ENCODE measurements at regions of chr12 and their contacts with region 1.

Region 1: GRCh38 chr12:125183187-125184067 is 118.2 kb downstream of the AACS start:
- DNase-seq: peak; percentile 77 to 94 (median 88)
- H3K4me3 ChIP-seq: peak overlapping the region in 17 of 59 donors; percentile 1 to 41 (median 19)
- H3K27ac ChIP-seq: peak overlapping the region in 52 of 59 donors; percentile 6 to 88 (median 66)
- H3K27me3 ChIP-seq: peaks cover 0 to 11% (median 0%) of the 10 kb centered on the region in 45 donors
- CTCF ChIP-seq: peak; percentile 95 to 100 (median 99)

Region 2: DNA sequence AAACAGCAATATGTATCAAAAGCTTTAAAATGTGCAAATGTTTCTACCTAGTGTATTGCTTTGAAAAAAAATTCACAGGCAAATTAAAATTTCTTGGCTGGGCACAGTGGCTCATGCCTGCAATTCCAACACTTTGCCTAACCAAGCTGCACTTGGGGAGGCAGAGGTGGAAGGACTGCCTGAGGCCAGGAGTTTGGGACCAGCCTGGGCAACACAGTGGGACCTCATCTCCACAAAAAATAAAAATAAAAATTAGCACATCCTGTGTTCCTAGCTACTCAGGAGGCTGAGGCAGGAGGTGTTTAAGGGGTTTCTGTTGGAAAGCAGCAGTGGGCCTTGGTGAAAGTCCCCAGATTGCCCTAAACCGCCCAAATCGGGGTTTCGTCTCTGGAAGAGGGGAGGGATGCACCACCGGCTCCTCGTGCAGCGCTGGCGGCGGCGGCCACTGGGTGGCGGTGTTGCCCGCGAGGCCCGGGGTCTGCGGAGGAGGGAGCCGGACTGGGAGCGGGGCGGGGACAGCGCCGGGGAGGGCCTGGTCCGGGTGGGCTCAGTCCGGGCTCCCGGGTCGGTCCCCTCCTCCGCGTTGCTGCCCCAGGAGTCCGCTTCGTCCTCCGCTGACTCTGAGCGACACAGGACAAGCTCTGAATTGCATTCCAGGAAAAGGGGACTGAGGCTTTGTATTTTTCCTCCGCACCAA is 147.4 kb after region 1 on chr12:
- intact Hi-C with region 1: loop called (anchors 5 to 10 kb)
- DNase-seq: peak; percentile 58 to 91 (median 76)
- H3K4me3 ChIP-seq: peak overlapping the region; percentile 28 to 79 (median 63)
- H3K27ac ChIP-seq: peak overlapping the region in 41 of 59 donors; percentile 1 to 83 (median 57)
- H3K27me3 ChIP-seq: peaks cover 0 to 3% (median 0%) of the 10 kb centered on the region in 45 donors
- CTCF ChIP-seq: peak; percentile 64 to 98 (median 88)

Region 3: DNA sequence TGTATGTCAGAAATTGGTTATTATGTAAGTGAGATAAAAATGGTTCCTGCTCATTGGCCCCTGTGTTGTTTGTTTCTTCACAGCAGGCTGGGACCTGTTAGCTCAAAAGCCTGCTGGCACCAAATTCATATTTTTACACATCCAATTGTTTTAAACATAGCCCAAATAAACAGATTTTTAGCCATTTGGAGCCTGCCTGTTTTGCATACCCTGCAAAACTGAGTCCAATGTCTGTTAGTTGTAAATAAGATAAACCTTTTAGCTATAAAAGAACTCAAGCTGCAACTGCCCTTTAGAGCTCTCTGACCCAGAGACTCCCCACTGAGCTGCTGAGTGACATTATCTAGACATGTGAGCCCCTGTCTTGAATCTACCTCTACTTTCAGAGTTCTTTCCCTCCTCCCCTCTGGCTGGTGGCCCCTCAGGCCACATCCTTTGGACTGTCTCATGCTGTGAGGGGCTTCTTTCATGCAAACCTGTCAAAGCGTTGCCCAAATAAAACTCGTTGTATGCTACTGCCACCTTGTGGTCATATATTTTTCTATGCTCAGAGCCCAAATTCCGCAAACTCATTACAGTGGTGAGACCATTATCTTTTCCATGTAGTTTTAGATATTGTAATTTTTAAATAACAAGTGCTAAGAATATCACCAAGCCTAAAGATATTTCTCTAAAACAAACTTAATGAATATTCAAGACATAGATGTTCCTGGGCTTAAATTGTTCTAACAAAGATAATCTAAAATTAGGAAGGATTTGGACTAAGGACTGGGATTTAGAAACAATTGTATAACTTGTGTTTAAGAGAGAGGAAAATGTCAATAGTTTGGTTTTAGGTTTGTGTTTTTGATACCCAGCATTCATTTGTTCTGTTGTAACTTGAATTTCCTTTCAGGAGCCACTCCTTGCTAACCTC is 219.7 kb after region 1 on chr12:
- intact Hi-C with region 1: loop called in 1 of 2 experiments (anchors 2 kb)
- DNase-seq: no peak
- H3K4me3 ChIP-seq: no peak overlapping the region
- H3K27ac ChIP-seq: peak overlapping the region in 5 of 59 donors; percentile 3 to 67 (median 36)
- H3K27me3 ChIP-seq: no peaks in the 10 kb centered on the region
- CTCF ChIP-seq: peak; percentile 33 to 69 (median 55)

Region 4: GRCh38 chr12:126747530-126748149 is 1564.2 kb after region 1 on chr12:
- intact Hi-C with region 1: loop called in 1 of 2 experiments (anchors 5 kb)
- DNase-seq: peak in 8 of 10 donors; percentile 14 to 70 (median 46)
- H3K4me3 ChIP-seq: no peak overlapping the region
- H3K27ac ChIP-seq: no peak overlapping the region
- H3K27me3 ChIP-seq: no peaks in the 10 kb centered on the region
- CTCF ChIP-seq: peak; percentile 54 to 96 (median 90)